OCI-LY7 (cell line): ENCODE measurements at regions of chr4 and their contacts with region 1.

Region 1: GRCh38 chr4:78749972-78750727 is 26.0 kb upstream of the BMP2K start:
- DNase-seq: peak; percentile 81
- H3K4me3 ChIP-seq: peak overlapping the region; percentile 52
- H3K27ac ChIP-seq: peak overlapping the region; percentile 88
- H3K4me1 ChIP-seq: peaks cover 61% of the 10 kb centered on the region
- CTCF ChIP-seq: no peak

Region 2: GRCh38 chr4:78737035-78737434 is 13.1 kb before region 1 on chr4:
- CTCF ChIA-PET with region 1: no interaction called
- POLR2A ChIA-PET with region 1: interaction called, 25 read pairs
- intact Hi-C with region 1: no loop called
- DNase-seq: no peak
- H3K4me3 ChIP-seq: no peak overlapping the region
- H3K27ac ChIP-seq: no peak overlapping the region
- H3K4me1 ChIP-seq: peaks cover 37% of the 10 kb centered on the region
- CTCF ChIP-seq: no peak

Region 3: GRCh38 chr4:78766650-78767049 is 16.5 kb after region 1 on chr4:
- CTCF ChIA-PET with region 1: interaction called, 3 read pairs
- POLR2A ChIA-PET with region 1: interaction called, 73 read pairs
- intact Hi-C with region 1: no loop called
- DNase-seq: peak; percentile 56
- H3K4me3 ChIP-seq: no peak overlapping the region
- H3K27ac ChIP-seq: peak overlapping the region; percentile 53
- H3K4me1 ChIP-seq: peaks cover 29% of the 10 kb centered on the region
- CTCF ChIP-seq: no peak

Region 4: DNA sequence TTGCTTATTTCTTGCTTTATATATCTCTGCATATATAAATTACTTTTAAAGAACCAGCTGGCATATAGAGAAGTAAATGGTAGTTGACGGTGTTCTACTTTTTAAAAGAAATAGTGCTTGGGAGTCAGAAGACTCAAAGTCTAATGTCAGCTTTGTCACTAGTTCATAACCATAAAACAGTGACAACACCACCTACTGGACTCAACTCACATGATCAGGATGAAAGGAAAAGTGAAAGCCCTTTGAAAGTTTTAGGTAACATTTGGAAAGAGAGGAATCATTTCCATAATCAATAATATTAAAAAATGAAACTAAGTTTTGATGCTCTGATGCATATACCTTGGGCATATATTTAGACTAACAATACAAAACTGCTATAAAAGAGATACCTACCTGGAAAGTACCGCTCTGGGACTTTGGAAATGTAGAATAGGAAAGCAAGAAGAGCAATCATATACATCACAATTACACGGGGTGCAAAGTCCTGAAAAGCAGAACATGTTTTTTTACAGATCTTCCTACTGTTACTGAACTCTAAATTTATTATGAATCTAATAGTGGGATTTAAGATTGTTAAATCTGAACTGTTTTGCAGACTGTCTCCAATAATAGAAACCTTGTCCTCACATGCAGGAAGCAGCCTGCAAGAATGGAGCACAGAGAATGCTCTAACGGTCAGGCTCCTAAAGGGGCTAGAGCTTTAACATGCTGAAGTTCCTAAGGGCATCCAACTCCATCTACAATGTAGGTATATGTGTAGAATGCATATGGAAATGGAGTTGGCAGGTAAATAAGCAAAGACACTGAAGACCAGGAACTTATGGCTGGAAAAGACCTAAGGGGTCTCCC is 173.5 kb after region 1 on chr4:
- CTCF ChIA-PET with region 1: no interaction called
- POLR2A ChIA-PET with region 1: no interaction called
- intact Hi-C with region 1: no loop called
- DNase-seq: peak; percentile 15
- H3K4me3 ChIP-seq: no peak overlapping the region
- H3K27ac ChIP-seq: no peak overlapping the region
- H3K4me1 ChIP-seq: no peaks in the 10 kb centered on the region
- CTCF ChIP-seq: peak; percentile 64